ENCODE measurements at regions of chr10 and their contacts with region 1.

Region 1: GRCh38 chr10:117492504-117492903 is 50.0 kb upstream of the EMX2 start:
- DNase-seq: no peak
- ATAC-seq: no peak
- H3K4me3 ChIP-seq: no peak overlapping the region
- H3K27ac ChIP-seq: no peak overlapping the region
- H3K4me1 ChIP-seq: peaks cover 7% of the 10 kb centered on the region
- H3K27me3 ChIP-seq: no peaks in the 10 kb centered on the region
- CTCF ChIP-seq: no peak
- POLR2A ChIP-seq: no peak

Region 2: DNA sequence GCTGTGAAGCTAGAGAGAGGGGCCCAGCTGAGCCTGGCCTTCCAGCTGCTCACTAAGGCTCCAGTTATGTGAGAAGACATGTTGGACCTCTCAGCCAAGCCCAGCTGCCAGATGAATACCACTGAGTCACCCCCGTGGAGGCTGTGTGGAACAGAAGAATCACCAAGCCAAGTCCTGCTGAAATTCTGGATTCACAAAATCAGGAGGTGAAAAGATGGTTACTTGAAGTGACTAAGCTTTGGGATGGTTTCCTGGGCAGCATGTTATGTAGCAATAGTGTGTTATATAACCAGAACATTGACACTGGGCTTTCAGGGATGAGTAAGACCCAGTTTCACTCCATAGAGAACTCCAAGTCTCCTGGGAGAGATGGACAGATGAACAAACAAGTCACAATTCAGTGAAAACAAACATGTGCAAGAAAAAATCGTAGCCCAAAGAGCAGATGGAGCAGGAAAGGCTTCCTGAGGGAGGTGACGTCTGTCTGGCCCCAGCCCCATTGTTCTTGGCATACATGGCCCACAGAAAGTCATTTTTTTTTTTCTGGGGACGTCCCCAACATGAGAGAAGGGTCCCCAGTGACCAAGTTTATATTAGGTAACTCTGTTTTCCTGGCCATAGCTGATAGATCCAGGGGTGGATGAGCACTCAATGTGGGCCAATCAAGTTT is 53.1 kb before region 1 on chr10:
- intact Hi-C with region 1: no loop called
- DNase-seq: peak in 2 of 4 donors; percentile 27 to 39
- ATAC-seq: no peak
- H3K4me3 ChIP-seq: no peak overlapping the region
- H3K27ac ChIP-seq: no peak overlapping the region
- H3K4me1 ChIP-seq: no peaks in the 10 kb centered on the region
- H3K27me3 ChIP-seq: no peaks in the 10 kb centered on the region
- CTCF ChIP-seq: no peak
- POLR2A ChIP-seq: no peak

Region 3: GRCh38 chr10:117616179-117616578 is 123.7 kb after region 1 on chr10:
- intact Hi-C with region 1: no loop called
- DNase-seq: no peak
- ATAC-seq: no peak
- H3K4me3 ChIP-seq: no peak overlapping the region
- H3K27ac ChIP-seq: no peak overlapping the region
- H3K4me1 ChIP-seq: no peaks in the 10 kb centered on the region
- H3K27me3 ChIP-seq: no peaks in the 10 kb centered on the region
- CTCF ChIP-seq: no peak
- POLR2A ChIP-seq: no peak

Region 4: DNA sequence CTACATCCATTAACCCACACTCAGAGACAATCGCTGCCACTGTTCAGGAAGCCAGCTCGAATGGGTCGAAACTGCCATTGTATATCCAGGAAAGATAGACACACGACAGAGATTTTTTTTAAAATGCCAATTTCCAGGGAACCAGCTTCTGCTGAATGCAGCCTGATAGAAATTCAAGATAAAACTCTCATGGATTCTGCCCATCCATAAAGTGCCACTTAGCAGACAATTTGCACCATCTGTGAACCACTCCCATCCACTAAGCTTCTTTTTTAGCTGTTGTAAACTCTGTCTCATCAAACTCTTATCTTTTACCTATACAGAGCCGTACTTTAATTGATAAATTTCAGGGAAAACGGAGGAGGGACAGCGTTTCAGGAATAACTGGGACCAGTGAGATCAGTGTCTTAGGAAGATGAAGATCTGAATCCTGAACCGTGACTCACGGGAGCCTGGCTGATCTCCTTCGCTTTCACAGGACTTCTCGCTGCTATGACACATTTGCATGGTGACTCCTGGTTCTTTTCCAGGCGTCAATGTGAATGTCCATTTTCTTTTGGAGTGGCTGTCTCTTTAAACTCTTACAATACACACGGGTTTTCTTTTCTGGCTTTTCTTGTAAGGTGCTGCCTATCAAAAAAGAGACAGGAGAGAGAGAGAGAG is 746.2 kb after region 1 on chr10:
- intact Hi-C with region 1: loop called (anchors 5 kb)
- DNase-seq: no peak
- ATAC-seq: no peak
- H3K4me3 ChIP-seq: no peak overlapping the region
- H3K27ac ChIP-seq: no peak overlapping the region
- H3K4me1 ChIP-seq: no peaks in the 10 kb centered on the region
- H3K27me3 ChIP-seq: peaks cover 0 to 24% of the 10 kb centered on the region in 2 donors
- CTCF ChIP-seq: no peak
- POLR2A ChIP-seq: no peak

Measured in body of pancreas (tissue), 4 donors.